HepG2 (cell line): ENCODE measurements at regions of chr19 and their contacts with region 1.

Region 1: DNA sequence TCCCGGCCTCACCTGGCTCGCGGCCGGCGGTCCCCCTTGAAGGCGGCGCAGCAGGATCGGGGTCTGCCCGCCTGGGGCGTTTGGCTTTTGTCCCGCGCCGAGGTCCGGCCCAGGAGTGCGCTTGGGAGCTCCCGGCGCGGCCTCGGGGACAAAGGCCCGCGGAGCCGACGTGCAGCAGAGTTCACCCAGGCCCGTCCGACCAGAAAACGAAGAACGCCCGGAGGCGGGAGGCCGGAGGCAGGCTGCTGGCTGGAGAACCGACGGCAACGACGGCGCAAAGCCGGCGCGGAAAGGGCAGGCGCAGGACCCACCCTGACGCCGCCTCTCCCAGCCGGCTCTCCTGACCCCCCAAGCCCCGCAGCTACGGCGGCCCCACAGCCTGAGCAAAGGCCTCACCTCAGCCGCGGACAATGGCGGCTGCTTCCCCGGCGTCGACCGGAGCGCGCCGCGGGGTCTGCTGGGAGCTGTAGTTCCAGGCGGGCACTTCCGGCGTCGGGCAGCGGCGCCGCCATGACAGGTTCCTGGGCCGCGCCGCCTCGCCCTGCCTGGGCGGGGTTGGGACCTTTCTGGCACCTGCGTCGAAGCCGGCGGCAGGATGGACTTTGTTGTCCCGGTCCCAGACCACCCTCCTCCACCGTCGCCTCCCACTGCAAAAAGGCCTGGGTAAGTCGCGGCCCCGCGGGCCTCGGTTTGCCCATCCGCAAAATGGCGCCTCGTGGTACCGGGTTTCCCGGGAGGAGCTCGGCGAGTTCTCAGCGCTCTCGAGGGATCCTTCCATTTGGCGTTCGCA is at the start of gene ZNF606:
- DNase-seq: peak; percentile 72
- ATAC-seq: peak; percentile 97
- H3K4me3 ChIP-seq: peak within 1 kb of the TSS; percentile 79 to 97 (median 88)
- H3K27ac ChIP-seq: peak within 1 kb of the TSS; percentile 97
- H3K4me1 ChIP-seq: peaks cover 31% of the 10 kb centered on the region
- H3K27me3 ChIP-seq: no peaks in the 10 kb centered on the region
- CTCF ChIP-seq: peak; percentile 25
- EP300 ChIP-seq: no peak
- POLR2A ChIP-seq: peak in 1 of 2 experiments; percentile 74; a peak in 2 of 4 replicates
- RAD21 ChIP-seq: peak; percentile 41; the same call in 1 of the 2 replicates
- total RNA-seq, gene ZNF606: 8.4 and 14.8 TPM in 2 replicates

Region 2: DNA sequence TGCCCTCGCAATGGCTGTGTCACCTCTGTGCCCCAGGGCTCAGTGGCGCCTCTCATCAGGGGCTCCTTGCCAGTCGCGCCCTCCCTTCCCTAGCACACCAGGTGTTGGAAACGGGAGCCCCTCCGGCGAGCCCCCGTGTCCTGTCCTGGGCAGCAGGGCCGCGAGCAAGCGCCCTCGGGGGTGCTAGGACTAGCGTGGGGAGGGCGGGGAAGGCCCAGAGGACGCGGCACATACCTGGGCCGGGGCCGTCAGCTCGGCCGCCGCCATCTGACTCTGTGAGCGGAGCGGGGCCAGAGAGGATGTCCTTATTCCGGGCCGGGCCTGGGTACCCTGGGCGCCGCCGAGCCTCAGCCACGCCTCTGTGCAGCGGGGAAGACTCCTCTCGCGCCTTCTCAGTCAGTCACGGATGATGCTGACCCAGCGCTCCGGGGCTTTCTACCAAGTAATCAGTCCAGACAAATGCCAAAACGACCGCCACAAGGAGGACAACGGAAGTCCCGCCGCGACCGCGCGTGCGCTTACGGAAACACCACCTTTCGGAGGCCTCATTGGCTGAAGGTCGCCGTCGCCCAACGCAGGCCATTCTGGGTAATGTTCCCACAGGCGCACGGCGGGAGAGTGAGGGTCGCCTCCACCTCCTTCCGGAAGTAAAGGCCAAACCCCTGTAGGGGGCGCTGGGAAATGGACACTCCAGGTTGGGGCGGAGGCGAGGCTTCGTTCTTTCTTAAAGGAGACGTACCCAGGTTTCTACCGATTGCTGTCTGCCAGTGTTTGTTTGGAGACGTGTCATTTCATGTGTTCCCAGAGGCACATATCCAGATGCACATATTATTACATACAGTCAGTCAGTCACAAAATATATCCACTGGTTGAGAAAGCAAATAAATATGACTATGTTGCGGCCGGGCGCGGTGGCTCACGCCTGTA is 55.1 kb before region 1 on chr19 and contains the start of gene ZNF256:
- CTCF ChIA-PET with region 1: no interaction called
- POLR2A ChIA-PET with region 1: interaction called, 5 read pairs
- in situ Hi-C with region 1: no loop called
- intact Hi-C with region 1: loop called (anchors 1 kb)
- DNase-seq: peak; percentile 93
- ATAC-seq: peak; percentile 99
- H3K4me3 ChIP-seq: peak within 1 kb of the TSS; percentile 76 to 90 (median 88)
- H3K27ac ChIP-seq: peak within 1 kb of the TSS; percentile 60
- H3K4me1 ChIP-seq: peaks cover 15% of the 10 kb centered on the region
- H3K27me3 ChIP-seq: no peaks in the 10 kb centered on the region; a peak in 1 of 5 replicates
- CTCF ChIP-seq: peak; percentile 93
- EP300 ChIP-seq: no peak
- POLR2A ChIP-seq: peak; percentile 55 to 60; a peak in 3 of 4 replicates
- RAD21 ChIP-seq: 0 out of 2 replicates have a peak, but pooled peaks have one; percentile 36
- total RNA-seq, gene ZNF256: 6.0 and 6.7 TPM in 2 replicates

Region 3: GRCh38 chr19:58083021-58083420 is 80.4 kb after region 1 on chr19:
- CTCF ChIA-PET with region 1: no interaction called
- POLR2A ChIA-PET with region 1: no interaction called
- in situ Hi-C with region 1: no loop called
- intact Hi-C with region 1: no loop called
- DNase-seq: no peak
- ATAC-seq: no peak
- H3K4me3 ChIP-seq: no peak overlapping the region
- H3K27ac ChIP-seq: no peak overlapping the region
- H3K4me1 ChIP-seq: no peaks in the 10 kb centered on the region
- H3K27me3 ChIP-seq: no peaks in the 10 kb centered on the region
- CTCF ChIP-seq: no peak
- EP300 ChIP-seq: no peak
- POLR2A ChIP-seq: no peak
- RAD21 ChIP-seq: no peak